Calu3 (cell line): ENCODE measurements at regions of chr17 and their contacts with region 1.

Region 1: DNA sequence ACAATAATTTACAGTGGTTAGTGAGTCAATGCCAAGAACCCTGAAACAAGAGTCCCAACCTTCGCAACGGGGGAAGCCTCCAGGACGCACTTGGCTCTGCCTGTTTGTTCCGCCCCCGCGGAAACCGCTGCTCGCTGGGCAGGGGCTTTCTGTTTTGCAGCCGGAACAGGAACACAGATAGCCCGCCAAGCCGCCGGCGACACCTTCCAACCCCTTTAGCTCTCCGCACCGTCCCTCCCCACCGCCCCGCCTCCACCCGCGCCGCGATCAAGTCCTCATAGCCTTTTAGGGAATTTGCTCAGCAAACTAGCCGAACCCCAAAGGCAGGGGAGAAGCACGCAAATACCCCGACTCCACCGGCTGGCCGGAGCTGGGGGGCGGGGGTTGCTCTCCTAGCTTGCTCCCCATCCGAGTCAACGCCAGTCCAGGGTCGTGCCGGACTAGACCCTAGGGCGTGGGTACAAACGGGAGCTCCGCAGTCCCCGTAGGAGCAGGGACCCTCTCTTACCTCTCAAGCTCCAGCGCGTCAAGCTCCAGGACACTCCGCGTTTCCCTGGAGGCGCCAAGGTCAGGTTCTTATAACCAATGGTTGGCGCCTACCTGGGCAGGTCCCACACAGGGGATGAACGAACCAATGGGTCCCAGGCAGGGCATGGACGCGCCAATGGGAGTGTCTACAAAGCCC is at the start of gene SLFN13:
- DNase-seq: peak; percentile 79
- H3K4me3 Mint-ChIP-seq: peak within 1 kb of the TSS; percentile 74
- H3K27ac Mint-ChIP-seq: peak within 1 kb of the TSS; percentile 77
- H3K4me1 Mint-ChIP-seq: peaks cover 9% of the 10 kb centered on the region
- H3K27me3 Mint-ChIP-seq: no peaks in the 10 kb centered on the region
- CTCF ChIP-seq: no peak
- total RNA-seq, gene SLFN13: 44.4 and 46.2 TPM in 2 replicates

Region 2: GRCh38 chr17:35373534-35373983 is 74.8 kb before region 1 on chr17 and contains the start of gene SLFN11:
- CTCF ChIA-PET with region 1: interaction called, 3 read pairs
- intact Hi-C with region 1: loop called (anchors 1 kb)
- DNase-seq: peak; percentile 57
- H3K4me3 Mint-ChIP-seq: peak within 1 kb of the TSS; percentile 92
- H3K27ac Mint-ChIP-seq: peak within 1 kb of the TSS; percentile 88
- H3K4me1 Mint-ChIP-seq: peaks cover 41% of the 10 kb centered on the region
- H3K27me3 Mint-ChIP-seq: no peaks in the 10 kb centered on the region
- CTCF ChIP-seq: no peak
- total RNA-seq, gene SLFN11: 35.3 and 38.2 TPM in 2 replicates

Region 3: GRCh38 chr17:35390663-35391062 is 57.7 kb before region 1 on chr17:
- CTCF ChIA-PET with region 1: no interaction called
- intact Hi-C with region 1: no loop called
- DNase-seq: no peak
- H3K4me3 Mint-ChIP-seq: no peak overlapping the region
- H3K27ac Mint-ChIP-seq: no peak overlapping the region
- H3K4me1 Mint-ChIP-seq: peaks cover 8% of the 10 kb centered on the region
- H3K27me3 Mint-ChIP-seq: no peaks in the 10 kb centered on the region
- CTCF ChIP-seq: no peak

Region 4: DNA sequence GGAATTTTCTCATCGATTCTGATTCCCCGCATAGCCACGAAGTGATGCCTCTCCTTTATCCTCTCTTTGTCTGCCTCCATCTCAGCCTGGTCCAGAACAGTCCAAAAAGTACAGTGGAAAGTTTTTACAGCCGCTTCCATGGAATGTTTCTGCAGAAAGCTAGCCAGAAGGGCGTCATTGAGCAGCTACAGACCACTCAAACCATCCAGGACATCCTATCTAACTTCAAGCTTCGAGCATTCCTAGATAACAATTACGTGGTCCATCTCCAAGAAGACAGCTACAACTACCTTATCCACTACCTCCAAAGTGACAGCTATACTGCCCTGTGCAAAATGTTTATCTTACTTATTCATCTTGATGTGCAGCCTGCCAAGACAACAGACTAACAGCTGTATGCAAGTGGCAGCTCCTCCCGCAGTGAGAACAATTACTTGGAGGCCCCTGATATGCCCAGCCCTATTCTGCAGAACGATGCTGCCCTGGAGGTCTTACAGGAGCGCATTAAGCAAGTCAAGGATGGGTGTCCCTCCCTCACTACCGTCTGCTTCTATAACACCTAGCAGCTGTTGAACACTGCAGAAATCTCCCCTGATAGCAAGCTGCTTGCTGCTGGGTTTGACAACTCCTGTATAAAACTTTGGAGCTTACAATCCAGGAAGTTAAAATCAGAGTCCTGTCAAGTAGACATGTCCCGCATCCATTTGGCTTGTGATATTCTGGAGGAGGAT is 50.3 kb after region 1 on chr17:
- CTCF ChIA-PET with region 1: no interaction called
- intact Hi-C with region 1: no loop called
- DNase-seq: no peak
- H3K4me3 Mint-ChIP-seq: no peak overlapping the region
- H3K27ac Mint-ChIP-seq: no peak overlapping the region
- H3K4me1 Mint-ChIP-seq: no peaks in the 10 kb centered on the region
- H3K27me3 Mint-ChIP-seq: peaks cover 60% of the 10 kb centered on the region
- CTCF ChIP-seq: no peak